Activated CD4-positive, alpha-beta T cell treated with anti-CD3 and anti-CD28 coated beads for 36 hours (primary cell): ENCODE measurements at regions of chr12 and their contacts with region 1.

Region 1: DNA sequence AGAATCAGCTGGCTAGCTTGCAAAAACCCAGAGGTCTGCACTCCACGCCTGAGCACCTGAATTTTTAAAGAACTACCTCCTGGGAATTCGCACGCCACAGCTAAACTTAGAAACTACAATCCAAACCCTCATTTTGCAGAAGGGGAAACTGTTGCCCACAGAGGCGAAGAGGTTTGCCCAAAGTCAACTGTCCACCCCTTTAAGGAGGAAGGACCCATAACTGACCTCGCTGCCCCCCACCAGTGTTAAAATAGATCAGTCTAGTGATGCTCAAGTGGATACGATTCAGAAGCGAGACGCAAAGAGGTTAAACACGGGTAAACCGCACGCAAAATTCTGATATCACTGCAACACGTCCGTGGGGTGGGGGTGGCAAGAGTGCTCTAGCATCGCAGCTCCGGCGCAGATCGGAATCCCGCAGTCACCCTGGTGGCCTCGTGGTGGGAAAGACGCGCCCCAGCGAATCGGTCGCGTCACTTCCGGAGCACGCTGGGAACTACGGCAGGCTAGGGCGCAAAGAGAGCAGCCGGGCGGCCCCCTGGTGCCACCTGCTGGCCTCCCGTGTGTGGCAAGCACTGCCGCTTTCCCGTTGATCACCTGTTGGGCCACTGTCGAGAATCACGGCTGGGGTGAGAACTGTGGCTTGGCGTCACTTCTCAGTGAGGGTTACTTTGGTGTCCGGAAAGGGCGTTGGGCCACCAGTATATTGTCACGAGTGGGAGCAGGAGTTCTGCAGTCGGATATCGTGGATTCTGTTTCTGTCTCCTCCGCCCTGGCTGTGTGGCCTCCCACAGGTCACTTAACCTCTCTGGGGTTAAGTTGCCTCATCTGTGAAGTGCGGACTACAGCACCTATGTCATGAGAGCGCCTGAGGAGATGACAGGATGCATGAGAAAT is at the start of gene ALKBH2:
- DNase-seq: peak; percentile 97
- ATAC-seq: peak; percentile 74
- H3K4me3 Mint-ChIP-seq: peak within 1 kb of the TSS; percentile 86
- H3K27ac Mint-ChIP-seq: peak within 1 kb of the TSS; percentile 90
- H3K4me1 Mint-ChIP-seq: peaks cover 30% of the 10 kb centered on the region
- H3K27me3 Mint-ChIP-seq: no peaks in the 10 kb centered on the region
- total RNA-seq, gene ALKBH2: 32.1 to 33.3 TPM

Region 2: DNA sequence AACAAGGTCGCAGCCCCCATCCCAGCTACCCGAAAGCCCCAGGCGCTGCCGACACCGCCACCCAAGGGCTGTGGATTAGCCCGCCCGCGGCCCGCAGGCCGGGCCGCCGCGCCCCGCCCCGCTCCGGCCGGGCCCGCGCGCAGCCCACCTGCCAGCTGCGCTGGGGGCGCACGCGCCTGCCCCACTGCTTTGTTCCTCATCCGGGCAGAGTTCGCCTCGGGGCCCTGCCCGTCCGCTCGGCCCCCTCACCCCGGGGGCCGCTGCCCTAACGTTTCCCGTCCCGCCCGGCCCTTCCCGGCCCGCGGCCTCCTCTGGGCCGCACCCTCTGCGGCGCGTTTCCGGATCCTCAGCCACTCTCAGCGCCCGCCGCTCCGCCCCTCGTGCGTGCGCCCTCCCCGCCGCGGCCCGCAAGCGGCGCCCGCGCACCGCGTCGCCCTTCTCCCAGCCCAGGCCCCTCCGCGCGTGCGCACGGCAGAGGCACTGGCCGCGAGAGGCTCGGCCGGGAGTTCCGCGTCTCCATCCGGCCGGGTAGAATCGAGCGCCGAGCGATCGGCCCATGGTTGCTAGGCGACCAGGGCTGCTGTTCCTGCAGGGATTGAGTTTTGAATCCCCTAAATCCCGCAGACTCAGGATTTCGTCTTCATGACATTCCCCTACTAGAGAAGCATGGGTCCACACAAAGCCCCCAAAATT is 1332.3 kb before region 1 on chr12 and contains the start of gene PRDM4:
- CTCF ChIA-PET with region 1: no interaction called
- POLR2A ChIA-PET with region 1: no interaction called
- intact Hi-C with region 1: loop called in 1 of 2 experiments (anchors 5 kb)
- DNase-seq: peak; percentile 95
- ATAC-seq: peak; percentile 93
- H3K4me3 Mint-ChIP-seq: peak within 1 kb of the TSS; percentile 92
- H3K27ac Mint-ChIP-seq: peak within 1 kb of the TSS; percentile 91
- H3K4me1 Mint-ChIP-seq: peaks cover 27% of the 10 kb centered on the region
- H3K27me3 Mint-ChIP-seq: no peaks in the 10 kb centered on the region
- total RNA-seq, gene PRDM4: 27.5 to 29.7 TPM

Region 3: DNA sequence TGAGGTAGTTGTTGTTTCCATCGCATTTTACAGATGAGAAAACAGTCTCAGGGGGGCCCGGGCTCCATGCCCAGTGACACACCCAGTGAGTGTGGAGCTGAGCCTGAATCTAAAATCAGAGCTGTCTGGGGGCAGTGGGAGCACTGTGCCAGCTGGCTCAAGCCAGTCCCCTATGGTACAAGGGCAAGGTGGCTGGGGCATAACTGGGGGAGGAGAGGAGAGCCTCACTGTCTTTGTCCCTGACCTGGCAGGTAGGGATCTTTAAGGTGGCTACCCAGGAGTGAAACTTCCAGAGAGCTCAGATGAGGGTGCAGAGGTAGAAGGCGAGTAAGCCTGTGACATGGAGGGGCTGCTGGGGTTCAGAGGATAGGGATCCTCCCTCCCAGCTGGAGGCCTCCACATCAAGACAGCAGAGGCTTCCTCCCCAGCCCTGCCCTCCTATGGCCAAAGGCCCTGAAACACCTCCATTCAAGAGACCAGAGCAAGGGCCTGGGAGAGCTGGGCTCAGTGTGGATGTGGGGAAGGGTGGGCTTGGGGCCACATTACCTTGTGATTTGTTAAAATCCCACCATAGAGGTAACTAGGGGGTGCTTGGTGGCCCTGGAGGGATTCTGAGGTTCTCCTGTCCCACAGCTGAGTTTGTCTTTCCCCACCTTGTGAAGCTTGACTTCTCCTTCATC is 1285.7 kb before region 1 on chr12:
- CTCF ChIA-PET with region 1: no interaction called
- POLR2A ChIA-PET with region 1: no interaction called
- intact Hi-C with region 1: no loop called
- DNase-seq: no peak
- ATAC-seq: no peak
- H3K4me3 Mint-ChIP-seq: no peak overlapping the region
- H3K27ac Mint-ChIP-seq: no peak overlapping the region
- H3K4me1 Mint-ChIP-seq: no peaks in the 10 kb centered on the region
- H3K27me3 Mint-ChIP-seq: peaks cover 8% of the 10 kb centered on the region

Region 4: GRCh38 chr12:108664338-108665258 is 428.7 kb before region 1 on chr12:
- CTCF ChIA-PET with region 1: interaction called, 5 read pairs
- POLR2A ChIA-PET with region 1: no interaction called
- intact Hi-C with region 1: loop called in 1 of 2 experiments (anchors 1 kb)
- DNase-seq: peak; percentile 91
- ATAC-seq: peak; percentile 99
- H3K4me3 Mint-ChIP-seq: peak overlapping the region; percentile 18
- H3K27ac Mint-ChIP-seq: peak overlapping the region; percentile 84
- H3K4me1 Mint-ChIP-seq: peaks cover 29% of the 10 kb centered on the region
- H3K27me3 Mint-ChIP-seq: no peaks in the 10 kb centered on the region

Region 5: DNA sequence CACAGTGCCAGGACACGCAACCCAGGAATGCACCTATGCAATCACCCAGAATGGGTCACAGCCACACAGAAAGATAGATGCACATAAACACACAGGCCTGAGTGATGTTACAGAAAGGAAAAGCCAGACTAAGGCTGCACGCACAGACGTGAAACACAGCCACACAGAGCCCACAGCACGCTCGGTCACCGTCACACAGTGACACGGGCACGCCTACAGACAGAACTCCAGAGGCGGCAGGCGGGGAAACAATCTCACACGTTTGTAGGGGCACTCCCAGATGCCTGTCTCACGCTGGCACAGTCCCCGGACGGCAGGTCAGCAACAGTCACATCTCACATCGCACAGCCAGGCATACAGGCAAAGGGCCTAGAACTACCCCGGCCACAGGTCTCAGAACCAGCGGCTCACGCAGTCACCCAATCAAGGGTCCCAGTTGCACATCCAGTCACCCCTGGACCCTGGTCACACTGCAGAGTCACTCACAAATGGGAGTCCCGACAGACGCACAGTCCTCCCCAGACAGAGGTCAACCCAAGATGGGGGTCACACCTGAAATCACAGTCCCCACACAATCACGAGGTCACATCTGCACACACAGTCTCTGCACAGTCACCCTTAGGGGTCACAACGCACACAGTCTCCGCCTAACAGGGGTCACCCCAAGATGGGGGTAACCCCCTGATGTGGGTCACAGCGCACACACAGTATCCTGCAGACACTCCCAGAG is 236.7 kb before region 1 on chr12:
- CTCF ChIA-PET with region 1: no interaction called
- POLR2A ChIA-PET with region 1: no interaction called
- intact Hi-C with region 1: loop called (anchors 1 to 5 kb)
- DNase-seq: peak; percentile 81
- ATAC-seq: peak; percentile 64
- H3K4me3 Mint-ChIP-seq: peak overlapping the region; percentile 82
- H3K27ac Mint-ChIP-seq: peak overlapping the region; percentile 86
- H3K4me1 Mint-ChIP-seq: peaks cover 43% of the 10 kb centered on the region
- H3K27me3 Mint-ChIP-seq: peaks cover 2% of the 10 kb centered on the region

Region 6: DNA sequence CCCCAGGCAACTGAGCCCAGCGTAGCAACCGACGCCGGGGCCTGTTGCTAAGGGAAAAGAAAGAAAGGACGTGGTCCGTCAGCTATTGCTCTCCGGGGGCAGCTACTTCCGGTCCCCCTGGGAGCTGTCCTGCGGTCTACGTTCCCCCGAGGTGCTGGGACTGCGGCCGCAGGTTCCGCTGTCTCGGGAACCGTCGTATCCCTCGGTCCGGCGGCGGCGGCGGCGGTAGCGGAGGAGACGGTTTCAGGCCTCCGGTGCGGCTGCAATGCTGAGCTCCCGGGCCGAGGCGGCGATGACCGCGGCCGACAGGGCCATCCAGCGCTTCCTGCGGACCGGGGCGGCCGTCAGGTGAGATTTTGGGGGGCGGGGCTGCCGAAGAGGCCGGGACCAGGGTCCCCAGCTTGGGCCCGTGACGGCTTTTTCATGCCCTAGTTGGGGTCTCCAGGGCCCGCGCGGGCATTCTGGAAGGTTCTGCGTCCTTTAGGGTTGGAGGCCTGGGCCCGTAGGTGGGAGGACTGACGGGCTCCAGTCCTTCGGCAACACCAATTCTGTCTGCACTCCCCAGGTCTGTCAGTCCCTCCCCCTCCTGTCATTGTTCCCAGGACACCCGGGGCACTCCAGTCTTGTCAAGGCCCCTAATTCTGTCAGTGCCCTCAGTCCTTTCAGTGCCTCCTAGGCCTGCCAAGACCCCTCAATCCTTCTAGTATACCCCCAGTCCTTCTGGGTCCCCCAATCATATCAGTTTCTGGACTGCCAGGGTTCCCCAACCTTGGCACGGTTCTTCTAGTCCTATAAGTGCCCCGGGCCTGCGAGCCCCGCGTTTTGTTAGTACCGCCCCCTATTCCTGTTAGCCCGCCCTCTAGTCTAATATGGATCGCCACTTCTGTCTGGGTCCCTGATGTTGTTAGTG is 40.6 kb before region 1 on chr12 and contains the start of gene USP30:
- CTCF ChIA-PET with region 1: interaction called, 14 read pairs
- POLR2A ChIA-PET with region 1: interaction called, 4 read pairs
- intact Hi-C with region 1: loop called (anchors 1 kb)
- DNase-seq: peak; percentile 91
- ATAC-seq: peak; percentile 70
- H3K4me3 Mint-ChIP-seq: peak within 1 kb of the TSS; percentile 86
- H3K27ac Mint-ChIP-seq: peak within 1 kb of the TSS; percentile 97
- H3K4me1 Mint-ChIP-seq: peaks cover 6% of the 10 kb centered on the region
- H3K27me3 Mint-ChIP-seq: no peaks in the 10 kb centered on the region
- total RNA-seq, gene USP30: 9.2 to 14.5 TPM

Region 7: DNA sequence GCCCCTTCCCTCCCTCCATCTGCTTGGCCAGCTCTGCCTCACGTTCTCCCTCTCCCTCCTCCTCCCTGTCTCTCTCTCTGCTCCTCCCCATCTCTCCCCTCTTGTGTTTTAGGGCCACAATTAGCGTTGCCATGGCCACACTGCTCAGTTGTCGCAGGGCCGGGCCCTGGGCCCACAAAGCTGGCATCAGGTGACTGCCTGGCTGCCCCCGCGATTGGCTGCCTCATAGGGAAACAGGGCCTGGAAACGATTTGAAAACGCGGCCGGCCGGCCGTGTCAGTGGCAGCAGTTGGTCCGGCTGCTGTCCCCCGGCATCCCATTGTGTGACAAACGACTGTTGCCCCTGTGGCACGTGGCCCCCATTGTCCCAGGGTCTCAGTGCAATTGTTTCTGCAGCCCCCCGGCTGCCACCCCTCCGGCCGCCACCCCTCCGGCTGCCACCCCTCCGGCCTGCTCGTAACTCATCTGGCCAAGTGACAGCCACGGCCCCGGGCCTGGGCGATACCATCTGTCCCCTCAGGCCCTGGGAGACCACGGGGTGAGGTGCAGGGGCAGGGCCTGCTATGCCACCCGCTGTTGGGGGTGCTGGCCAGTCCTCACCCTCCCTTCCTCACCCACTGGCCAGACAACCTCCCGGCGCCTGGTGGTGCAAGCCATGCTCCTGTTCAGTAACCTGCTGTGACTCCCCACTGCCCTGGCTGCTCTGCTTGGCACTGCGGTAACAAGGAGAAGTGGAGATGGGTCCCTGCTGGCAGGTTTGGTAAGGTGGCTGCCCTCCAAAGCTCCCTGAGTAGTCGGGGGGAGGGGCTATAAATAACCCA is 198.5 kb after region 1 on chr12:
- CTCF ChIA-PET with region 1: no interaction called
- POLR2A ChIA-PET with region 1: no interaction called
- intact Hi-C with region 1: no loop called
- DNase-seq: peak; percentile 15
- ATAC-seq: peak; percentile 42
- H3K4me3 Mint-ChIP-seq: no peak overlapping the region
- H3K27ac Mint-ChIP-seq: no peak overlapping the region
- H3K4me1 Mint-ChIP-seq: no peaks in the 10 kb centered on the region
- H3K27me3 Mint-ChIP-seq: peaks cover 21% of the 10 kb centered on the region

Region 8: DNA sequence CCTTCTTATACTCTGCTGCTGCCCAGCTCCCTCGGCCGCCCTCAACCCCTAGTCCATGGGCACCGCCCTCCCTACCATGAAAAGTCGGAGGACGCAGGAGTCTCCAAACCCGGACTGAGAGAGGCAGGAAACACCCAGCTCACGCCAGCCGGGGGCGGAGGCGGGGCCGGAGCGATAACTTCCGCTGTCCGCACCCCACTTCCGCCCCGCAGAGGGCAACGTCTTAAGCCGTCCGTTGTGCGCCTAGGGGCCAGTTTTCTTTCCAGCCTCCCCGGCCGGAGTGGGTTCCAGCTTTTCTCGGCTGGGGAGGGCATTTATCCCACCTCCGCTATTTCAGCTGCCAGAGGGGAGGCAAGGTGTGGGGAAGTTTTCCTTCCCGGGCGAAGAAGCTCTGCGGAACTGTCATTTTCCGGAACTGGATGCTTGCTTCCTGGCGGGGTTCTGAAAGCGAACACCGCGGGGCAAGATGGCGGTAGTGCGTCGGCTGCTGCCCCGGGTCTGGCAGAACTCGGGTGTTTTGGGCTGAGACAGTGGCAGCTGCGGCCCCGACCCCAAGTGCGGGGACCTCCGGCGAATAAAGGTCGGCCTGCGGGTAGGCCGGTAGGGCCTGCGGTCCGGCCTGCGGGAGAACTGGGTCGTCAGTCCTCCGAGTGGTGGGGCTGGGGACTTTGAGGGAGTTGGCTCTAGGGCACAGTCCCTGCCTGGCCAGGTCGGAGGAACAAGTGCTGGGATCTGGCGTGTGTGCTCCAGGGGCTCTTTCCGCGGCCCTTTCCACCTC is 384.1 kb after region 1 on chr12 and contains the starts of genes KCTD10 and UBE3B:
- CTCF ChIA-PET with region 1: no interaction called
- POLR2A ChIA-PET with region 1: no interaction called
- intact Hi-C with region 1: loop called in 1 of 2 experiments (anchors 1 kb)
- DNase-seq: peak; percentile 92
- ATAC-seq: peak; percentile 97
- H3K4me3 Mint-ChIP-seq: peak within 1 kb of the TSS; percentile 95
- H3K27ac Mint-ChIP-seq: peak within 1 kb of the TSS; percentile 99
- H3K4me1 Mint-ChIP-seq: peaks cover 43% of the 10 kb centered on the region
- H3K27me3 Mint-ChIP-seq: no peaks in the 10 kb centered on the region
- total RNA-seq, gene KCTD10: 42.0 to 46.3 TPM
- total RNA-seq, gene UBE3B: 25.7 to 27.2 TPM